Body of pancreas (tissue), 4 donors: ENCODE measurements at regions of chr19 and their contacts with region 1.

Region 1: GRCh38 chr19:18596752-18597157 is 8.2 kb downstream of the REX1BD start:
- DNase-seq: peak; percentile 68 to 85 (median 77)
- ATAC-seq: peak; percentile 69
- H3K4me3 ChIP-seq: no peak overlapping the region
- H3K27ac ChIP-seq: no peak overlapping the region
- H3K4me1 ChIP-seq: peaks cover 21% of the 10 kb centered on the region
- H3K27me3 ChIP-seq: peaks cover 0 to 15% of the 10 kb centered on the region in 2 donors
- CTCF ChIP-seq: no peak
- POLR2A ChIP-seq: no peak

Region 2: GRCh38 chr19:18542936-18543815 is 53.6 kb before region 1 on chr19 and contains the start of gene FKBP8:
- intact Hi-C with region 1: no loop called
- DNase-seq: peak; percentile 93 to 96 (median 95)
- ATAC-seq: peak; percentile 99
- H3K4me3 ChIP-seq: peak within 1 kb of the TSS; percentile 51 to 53
- H3K27ac ChIP-seq: peak within 1 kb of the TSS; percentile 70 to 86 (median 76)
- H3K4me1 ChIP-seq: peaks cover 16% of the 10 kb centered on the region
- H3K27me3 ChIP-seq: no peaks in the 10 kb centered on the region
- CTCF ChIP-seq: no peak
- POLR2A ChIP-seq: no peak
- total RNA-seq, gene FKBP8: 235 to 247 TPM

Region 3: DNA sequence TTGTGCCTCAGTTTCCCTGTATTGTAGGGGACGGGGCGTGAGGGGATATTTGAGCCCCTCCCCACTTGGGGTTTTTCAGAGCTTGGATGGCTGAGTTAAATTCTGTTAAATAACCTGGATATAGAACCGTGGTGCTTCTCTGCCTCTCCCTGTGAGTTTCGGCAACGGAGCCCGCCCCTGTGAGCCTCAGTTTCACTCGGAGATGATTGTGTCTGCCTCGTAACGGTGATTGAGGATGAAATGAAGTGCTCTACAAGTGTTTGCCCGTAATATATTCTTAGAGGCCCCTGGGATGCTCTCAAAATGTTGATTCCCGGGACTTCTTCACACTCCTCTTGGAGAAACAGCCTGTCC is 38.6 kb before region 1 on chr19:
- intact Hi-C with region 1: no loop called
- DNase-seq: no peak
- ATAC-seq: no peak
- H3K4me3 ChIP-seq: peak overlapping the region; percentile 57 to 81
- H3K27ac ChIP-seq: peak overlapping the region; percentile 79 to 96 (median 92)
- H3K4me1 ChIP-seq: peaks cover 15% of the 10 kb centered on the region
- H3K27me3 ChIP-seq: no peaks in the 10 kb centered on the region
- CTCF ChIP-seq: no peak
- POLR2A ChIP-seq: no peak

Region 4: GRCh38 chr19:18839465-18840287 is 242.9 kb after region 1 on chr19:
- intact Hi-C with region 1: loop called (anchors 5 kb)
- DNase-seq: peak in 3 of 4 donors; percentile 44 to 56 (median 55)
- ATAC-seq: peak; percentile 28
- H3K4me3 ChIP-seq: no peak overlapping the region
- H3K27ac ChIP-seq: peak overlapping the region in 2 of 4 donors; percentile 13 to 22
- H3K4me1 ChIP-seq: peaks cover 99% of the 10 kb centered on the region
- H3K27me3 ChIP-seq: no peaks in the 10 kb centered on the region
- CTCF ChIP-seq: no peak
- POLR2A ChIP-seq: no peak

Region 5: DNA sequence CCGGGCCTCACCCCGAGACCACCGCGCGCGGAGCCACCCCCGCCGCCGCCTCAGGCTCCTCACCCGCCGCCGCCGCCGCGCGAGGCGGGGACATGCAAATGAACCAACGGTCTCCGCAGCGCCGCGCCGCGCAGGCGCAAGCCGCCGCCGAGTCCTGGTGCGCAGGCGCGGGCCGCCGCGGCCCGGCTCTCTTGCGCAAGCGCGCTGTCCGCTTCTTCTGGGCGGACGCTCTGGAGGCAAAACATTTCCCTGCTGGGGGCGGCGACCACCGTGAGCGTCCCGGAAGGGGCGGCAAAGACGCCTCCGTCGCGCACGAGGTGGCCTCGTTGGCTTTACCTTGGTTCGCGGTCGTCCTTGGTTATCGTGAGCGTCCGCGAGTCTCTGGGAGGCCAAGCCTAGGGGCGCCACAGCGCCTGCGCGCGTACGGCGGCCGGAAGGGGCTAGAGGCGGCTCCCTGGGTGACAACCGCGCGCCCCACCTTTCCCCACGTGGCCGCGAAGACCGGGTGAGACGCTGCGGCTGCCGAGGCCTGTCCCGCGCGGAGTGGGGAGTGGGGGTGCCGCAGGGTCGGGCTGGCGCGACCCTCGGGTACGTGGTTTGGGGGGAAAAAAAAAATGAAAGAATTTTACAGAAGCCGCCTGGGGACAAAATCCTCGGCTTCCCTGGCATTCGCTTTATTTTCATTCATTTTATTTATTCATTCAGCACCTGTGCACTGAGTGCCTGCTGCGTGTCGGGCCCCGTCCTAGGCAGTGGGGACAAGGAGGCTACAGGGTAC is 436.9 kb after region 1 on chr19 and contains the starts of genes ARMC6 and SUGP2:
- intact Hi-C with region 1: no loop called
- DNase-seq: peak; percentile 83 to 87 (median 87)
- ATAC-seq: peak; percentile 90
- H3K4me3 ChIP-seq: peak within 1 kb of the TSS; percentile 67 to 68
- H3K27ac ChIP-seq: peak within 1 kb of the TSS; percentile 82 to 94 (median 90)
- H3K4me1 ChIP-seq: peaks cover 30% of the 10 kb centered on the region
- H3K27me3 ChIP-seq: no peaks in the 10 kb centered on the region
- CTCF ChIP-seq: peak in 4 of 7 experiments; percentile 27 to 51 (median 29)
- POLR2A ChIP-seq: peak; percentile 17 to 57 (median 57)
- total RNA-seq, gene ARMC6: 15.6 to 27.7 TPM
- total RNA-seq, gene SUGP2: 22.1 to 115 TPM